GM10248 (cell line): ENCODE measurements at regions of chr2 and their contacts with region 1.

Region 1: DNA sequence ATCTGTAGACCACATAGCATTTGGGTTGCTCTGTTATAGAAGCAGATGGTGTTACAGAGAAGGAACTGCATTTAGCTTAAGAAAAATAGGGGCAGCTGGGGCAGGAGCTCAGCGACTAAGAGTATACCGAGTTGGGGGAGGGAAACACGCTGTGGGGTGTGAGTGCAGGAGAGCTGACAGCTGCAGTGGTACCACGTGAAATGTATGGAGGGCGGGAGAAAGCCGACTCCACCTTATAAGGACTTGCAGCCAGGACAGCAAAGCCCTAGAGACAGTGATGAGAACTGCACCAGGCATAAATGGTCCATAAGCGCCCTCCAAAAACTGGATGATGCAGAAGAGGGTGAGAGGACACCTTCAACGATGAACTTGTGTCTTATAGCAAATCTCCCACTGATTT is 237.6 kb downstream of the PRKCE start:
- DNase-seq: peak; percentile 78
- CTCF ChIP-seq: peak; percentile 23

Region 2: GRCh38 chr2:45799671-45800381 is 89.2 kb before region 1 on chr2:
- CTCF ChIA-PET with region 1: no interaction called
- POLR2A ChIA-PET with region 1: no interaction called
- DNase-seq: no peak
- CTCF ChIP-seq: no peak

Region 3: DNA sequence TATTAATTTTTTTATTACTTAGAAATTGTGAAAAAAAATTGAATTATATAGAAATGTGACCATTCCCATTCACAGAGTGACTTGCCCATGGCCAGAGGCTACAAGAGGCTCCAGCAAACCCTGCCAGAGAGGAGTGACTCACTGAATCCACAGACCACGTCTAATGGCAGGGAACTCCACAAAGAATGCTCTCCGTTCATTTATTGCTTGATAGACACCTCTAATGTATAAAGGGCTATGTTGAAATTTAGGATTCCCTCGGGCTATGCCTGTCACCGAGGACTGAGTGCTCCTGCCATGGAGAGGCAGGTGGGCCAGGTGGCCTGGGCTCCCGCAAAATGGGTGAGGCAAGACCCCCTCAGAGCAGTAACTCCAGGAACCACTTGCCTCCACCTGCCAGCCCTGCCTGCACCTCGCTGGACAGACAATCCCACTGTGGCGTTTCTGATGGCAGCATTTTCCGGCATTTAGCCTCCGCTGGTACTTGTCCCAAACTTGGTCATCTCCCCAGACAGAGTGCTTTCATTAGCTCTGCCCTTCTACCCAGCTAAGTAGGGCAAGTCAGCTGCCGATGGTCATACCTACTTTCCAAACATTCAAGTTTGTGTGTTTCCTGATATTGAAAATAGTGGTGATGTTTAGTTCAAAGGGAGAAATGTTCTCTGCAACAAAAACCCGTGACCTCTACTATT is 37.3 kb before region 1 on chr2:
- CTCF ChIA-PET with region 1: interaction called, 10 read pairs
- POLR2A ChIA-PET with region 1: no interaction called
- DNase-seq: no peak
- CTCF ChIP-seq: no peak

Region 4: GRCh38 chr2:45862843-45863242 is 26.2 kb before region 1 on chr2:
- CTCF ChIA-PET with region 1: interaction called, 22 read pairs
- POLR2A ChIA-PET with region 1: no interaction called
- DNase-seq: no peak
- CTCF ChIP-seq: no peak

Region 5: GRCh38 chr2:45869165-45869501 is 19.9 kb before region 1 on chr2:
- CTCF ChIA-PET with region 1: interaction called, 32 read pairs
- POLR2A ChIA-PET with region 1: no interaction called
- DNase-seq: no peak
- CTCF ChIP-seq: no peak

Region 6: GRCh38 chr2:45874344-45874743 is 14.7 kb before region 1 on chr2:
- CTCF ChIA-PET with region 1: interaction called, 32 read pairs
- POLR2A ChIA-PET with region 1: no interaction called
- DNase-seq: no peak
- CTCF ChIP-seq: no peak

Region 7: GRCh38 chr2:45912109-45912508 is 23.1 kb after region 1 on chr2:
- CTCF ChIA-PET with region 1: interaction called, 19 read pairs
- POLR2A ChIA-PET with region 1: no interaction called
- DNase-seq: no peak
- CTCF ChIP-seq: no peak

Region 8: DNA sequence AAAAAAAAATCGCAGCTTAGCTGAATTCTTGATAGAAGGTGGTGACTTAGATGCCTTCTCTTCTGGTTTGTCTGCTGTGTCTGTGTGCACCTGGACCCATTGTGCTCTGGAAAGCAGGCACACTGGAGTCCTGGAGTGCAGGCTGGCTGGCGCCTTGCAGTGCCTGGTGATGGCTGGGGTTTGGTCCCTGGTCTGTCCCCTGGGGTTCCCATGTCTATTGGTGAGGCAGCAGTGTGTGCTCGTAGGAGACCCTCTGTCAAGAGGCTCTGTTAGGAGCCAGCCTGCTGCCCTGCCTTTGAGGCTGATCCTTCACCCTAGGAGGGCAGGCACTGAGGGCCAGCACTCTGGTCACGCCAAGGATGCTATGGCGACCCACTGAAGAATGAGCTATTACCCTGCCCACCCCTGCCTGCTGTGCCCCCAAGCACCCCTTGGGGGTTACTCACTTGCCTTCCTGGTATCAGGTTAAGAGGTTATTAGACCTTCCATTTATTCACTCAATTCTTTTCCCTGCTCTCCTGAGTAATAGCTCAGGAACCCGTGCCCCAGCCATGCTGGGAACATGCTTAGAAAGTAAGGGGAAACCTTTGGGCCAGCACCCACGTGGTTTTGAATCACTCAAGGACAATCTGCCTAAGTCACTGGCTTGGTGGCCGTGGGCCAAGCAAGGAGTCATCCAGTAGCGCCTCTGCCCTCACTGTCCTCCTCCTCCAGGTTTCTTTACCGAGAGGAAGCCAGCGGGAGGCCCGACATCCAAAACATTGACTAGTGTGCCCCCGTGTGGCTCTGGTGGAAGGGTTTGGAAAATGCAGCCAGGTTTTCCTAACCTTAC is 47.0 kb after region 1 on chr2:
- CTCF ChIA-PET with region 1: interaction called, 10 read pairs
- POLR2A ChIA-PET with region 1: no interaction called
- DNase-seq: peak; percentile 80
- CTCF ChIP-seq: peak; percentile 70

Region 9: DNA sequence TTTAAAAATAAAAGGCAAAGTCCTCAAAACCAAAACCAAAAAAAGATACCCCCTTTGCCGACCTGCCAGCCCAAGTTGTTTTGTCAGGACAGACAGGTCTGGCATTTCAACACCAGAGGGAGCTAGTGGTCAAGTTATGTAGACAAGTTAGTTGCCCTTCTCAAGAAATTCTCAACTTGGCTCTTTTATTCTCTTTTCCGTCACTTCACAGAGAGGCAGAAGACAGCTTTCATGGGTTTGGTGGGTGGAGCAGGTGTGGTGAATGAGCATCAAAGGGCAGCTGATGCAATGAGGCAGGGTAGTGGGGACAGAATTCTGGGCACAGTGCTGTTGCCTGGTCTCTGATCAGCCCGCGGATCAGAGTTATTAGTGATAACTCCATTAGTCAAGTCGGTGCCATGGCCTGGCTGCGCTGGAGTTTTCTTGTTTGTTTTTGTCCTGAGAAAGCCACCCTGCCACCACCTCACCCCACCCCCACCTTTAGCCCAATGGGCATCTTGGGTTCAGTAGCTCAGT is 104.5 kb after region 1 on chr2:
- CTCF ChIA-PET with region 1: no interaction called
- POLR2A ChIA-PET with region 1: no interaction called
- DNase-seq: peak; percentile 69
- CTCF ChIP-seq: peak; percentile 71

Region 10: GRCh38 chr2:46213906-46214305 is 324.9 kb after region 1 on chr2:
- CTCF ChIA-PET with region 1: no interaction called
- POLR2A ChIA-PET with region 1: no interaction called
- DNase-seq: no peak
- CTCF ChIP-seq: no peak